ENCODE measurements at regions of chr7 and their contacts with region 1.

Region 1: GRCh38 chr7:102450242-102450641 is 14.4 kb downstream of the ALKBH4 start:
- DNase-seq: peak in 8 of 9 experiments; percentile 31 to 73 (median 63)
- ATAC-seq: peak; percentile 95
- H3K4me3 ChIP-seq: no peak overlapping the region
- H3K4me3 Mint-ChIP-seq: no peak overlapping the region
- H3K27ac ChIP-seq: no peak overlapping the region
- H3K27ac Mint-ChIP-seq: no peak overlapping the region
- H3K4me1 ChIP-seq: no peaks in the 10 kb centered on the region
- H3K4me1 Mint-ChIP-seq: no peaks in the 10 kb centered on the region
- H3K27me3 ChIP-seq: no peaks in the 10 kb centered on the region
- H3K27me3 Mint-ChIP-seq: no peaks in the 10 kb centered on the region
- CTCF ChIP-seq: peak; percentile 54

Region 2: DNA sequence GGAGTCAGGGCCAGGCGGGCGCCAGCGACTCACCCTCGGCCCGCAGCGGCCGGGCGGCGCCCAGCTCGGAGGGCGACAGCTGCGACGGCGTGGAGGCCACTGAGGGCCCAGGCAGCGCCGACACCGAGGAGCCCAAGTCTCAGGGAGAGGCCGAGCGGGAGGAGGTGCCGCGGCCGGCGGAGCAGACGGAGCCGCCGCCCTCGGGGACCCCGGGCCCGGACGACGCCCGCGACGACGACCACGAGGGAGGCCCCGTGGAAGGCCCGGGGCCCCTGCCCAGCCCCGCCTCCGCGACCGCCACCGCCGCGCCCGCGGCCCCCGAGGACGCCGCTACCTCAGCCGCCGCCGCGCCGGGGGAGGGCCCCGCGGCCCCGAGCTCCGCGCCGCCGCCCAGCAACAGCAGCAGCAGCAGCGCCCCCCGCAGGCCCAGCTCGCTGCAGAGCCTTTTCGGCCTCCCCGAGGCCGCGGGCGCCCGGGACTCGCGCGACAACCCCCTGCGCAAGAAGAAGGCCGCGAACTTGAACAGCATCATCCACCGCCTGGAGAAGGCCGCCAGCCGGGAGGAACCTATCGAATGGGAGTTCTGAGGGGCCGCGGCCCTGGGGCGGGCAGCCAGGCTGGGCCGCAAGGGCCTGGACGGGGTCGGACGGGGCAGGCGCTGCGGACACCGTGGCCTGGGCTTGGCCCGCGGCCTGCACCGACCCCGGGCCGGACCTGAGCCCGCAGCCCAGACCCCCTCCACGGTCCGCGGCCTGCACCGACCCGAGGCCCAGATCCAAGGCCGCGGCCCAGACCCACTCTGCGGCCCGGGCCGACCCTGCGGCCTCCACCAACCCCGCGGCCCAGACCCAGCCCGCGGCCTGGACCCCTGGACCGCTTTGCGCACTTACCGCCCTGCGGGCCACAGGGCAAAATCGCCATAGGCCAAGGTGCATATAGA is 201.5 kb before region 1 on chr7:
- CTCF ChIA-PET with region 1: no interaction called
- POLR2A ChIA-PET with region 1: no interaction called
- intact Hi-C with region 1: no loop called
- DNase-seq: no peak
- ATAC-seq: no peak
- H3K4me3 ChIP-seq: no peak overlapping the region
- H3K4me3 Mint-ChIP-seq: no peak overlapping the region
- H3K27ac ChIP-seq: no peak overlapping the region
- H3K27ac Mint-ChIP-seq: no peak overlapping the region
- H3K4me1 ChIP-seq: no peaks in the 10 kb centered on the region
- H3K4me1 Mint-ChIP-seq: no peaks in the 10 kb centered on the region
- H3K27me3 ChIP-seq: no peaks in the 10 kb centered on the region
- H3K27me3 Mint-ChIP-seq: no peaks in the 10 kb centered on the region
- CTCF ChIP-seq: no peak

Region 3: DNA sequence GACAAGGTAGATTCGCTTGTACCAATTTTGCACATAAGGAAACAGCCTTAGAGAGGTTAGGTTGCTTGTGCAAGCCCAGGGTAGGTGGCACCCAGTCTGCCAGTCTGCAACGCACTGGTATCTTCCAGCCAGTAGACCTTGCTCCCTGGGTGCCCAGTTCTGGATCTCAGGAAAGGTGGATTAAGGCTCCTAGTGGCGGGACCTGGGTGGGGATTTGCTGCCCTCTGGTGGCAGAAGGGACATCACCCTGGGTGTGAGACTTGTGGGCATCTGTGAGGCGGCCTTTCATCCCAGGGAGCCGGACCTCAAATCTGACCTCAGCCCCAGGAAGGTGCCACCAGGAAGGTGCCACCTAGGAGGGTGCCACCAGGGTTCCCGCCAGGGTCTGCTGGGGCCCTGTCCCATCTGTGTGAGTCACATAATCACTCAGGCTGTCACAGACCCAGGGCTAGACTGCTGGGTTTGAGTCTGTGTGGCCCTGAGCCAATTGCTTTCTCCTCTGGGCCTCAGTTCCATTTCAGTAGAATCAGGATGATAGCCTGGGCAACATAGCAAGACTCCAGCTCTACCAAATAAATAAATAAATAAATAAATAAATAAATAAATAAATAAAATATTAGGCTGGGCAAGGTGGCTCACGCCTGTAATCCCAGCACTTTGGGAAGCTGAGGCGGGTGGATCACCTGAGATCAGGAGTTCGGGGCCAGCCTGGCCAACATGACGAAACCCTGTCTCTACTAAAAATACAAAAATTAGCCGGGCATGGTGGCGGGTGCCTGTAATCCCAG is 59.4 kb before region 1 on chr7:
- CTCF ChIA-PET with region 1: interaction called, 13 read pairs
- POLR2A ChIA-PET with region 1: no interaction called
- intact Hi-C with region 1: no loop called
- DNase-seq: peak; percentile 34 to 81 (median 70)
- ATAC-seq: peak; percentile 71
- H3K4me3 ChIP-seq: no peak overlapping the region
- H3K4me3 Mint-ChIP-seq: no peak overlapping the region
- H3K27ac ChIP-seq: no peak overlapping the region
- H3K27ac Mint-ChIP-seq: no peak overlapping the region
- H3K4me1 ChIP-seq: peaks cover 4% of the 10 kb centered on the region
- H3K4me1 Mint-ChIP-seq: peaks cover 5% of the 10 kb centered on the region
- H3K27me3 ChIP-seq: no peaks in the 10 kb centered on the region
- H3K27me3 Mint-ChIP-seq: no peaks in the 10 kb centered on the region
- CTCF ChIP-seq: peak; percentile 82

Region 4: DNA sequence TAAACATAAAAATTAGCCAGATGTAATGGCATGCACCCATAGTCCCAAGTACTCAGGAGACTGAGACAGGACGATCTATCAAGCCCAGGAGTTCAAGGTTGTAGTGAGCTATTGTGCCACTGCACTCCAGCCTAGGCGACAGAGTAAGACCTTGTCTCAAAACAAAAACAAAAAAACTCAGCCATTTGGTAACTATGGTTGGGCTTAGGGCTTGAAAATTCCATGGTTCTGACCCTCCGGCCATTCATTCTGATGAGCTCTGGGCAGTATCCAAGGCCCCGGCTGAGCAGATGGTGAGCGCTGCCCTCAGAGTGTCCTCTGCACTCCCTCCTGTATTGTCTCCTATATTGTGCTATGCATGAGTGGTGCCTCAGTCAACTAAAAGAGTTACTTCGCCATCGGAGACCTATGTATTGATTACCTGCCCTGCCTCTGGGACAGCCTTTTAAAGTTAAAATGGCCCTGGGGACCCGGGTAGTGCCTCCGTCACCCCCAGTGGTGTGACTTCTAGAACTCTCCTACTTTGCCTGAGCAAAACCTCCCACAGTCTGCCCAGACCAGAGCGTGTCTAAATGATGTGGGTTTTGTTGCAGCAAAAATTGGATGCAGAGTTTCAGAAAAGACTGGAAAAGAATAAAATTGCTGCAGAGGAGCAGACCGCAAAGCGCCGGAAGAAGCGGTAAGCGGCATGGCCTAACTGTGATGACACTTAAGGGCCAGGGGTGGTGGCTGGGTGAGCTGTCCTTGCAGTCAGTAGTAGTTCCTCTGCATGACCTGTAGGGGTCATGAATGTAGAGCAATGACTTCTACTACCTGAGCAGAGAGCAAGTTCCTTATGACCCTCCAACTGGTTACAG is 46.0 kb before region 1 on chr7:
- CTCF ChIA-PET with region 1: interaction called, 65 read pairs
- POLR2A ChIA-PET with region 1: no interaction called
- intact Hi-C with region 1: loop called (anchors 1 kb)
- DNase-seq: peak in 7 of 9 experiments; percentile 32 to 83 (median 56)
- ATAC-seq: peak; percentile 100
- H3K4me3 ChIP-seq: no peak overlapping the region
- H3K4me3 Mint-ChIP-seq: no peak overlapping the region
- H3K27ac ChIP-seq: no peak overlapping the region
- H3K27ac Mint-ChIP-seq: no peak overlapping the region
- H3K4me1 ChIP-seq: no peaks in the 10 kb centered on the region
- H3K4me1 Mint-ChIP-seq: peaks cover 13% of the 10 kb centered on the region
- H3K27me3 ChIP-seq: no peaks in the 10 kb centered on the region
- H3K27me3 Mint-ChIP-seq: no peaks in the 10 kb centered on the region
- CTCF ChIP-seq: peak; percentile 75

Region 5: GRCh38 chr7:102425639-102426267 is 24.5 kb before region 1 on chr7:
- CTCF ChIA-PET with region 1: interaction called, 14 read pairs
- POLR2A ChIA-PET with region 1: interaction called, 7 read pairs
- intact Hi-C with region 1: no loop called
- DNase-seq: peak; percentile 72 to 96 (median 87)
- ATAC-seq: peak; percentile 78
- H3K4me3 ChIP-seq: peak overlapping the region; percentile 34 to 43
- H3K4me3 Mint-ChIP-seq: peak overlapping the region; percentile 80
- H3K27ac ChIP-seq: peak overlapping the region; percentile 99
- H3K27ac Mint-ChIP-seq: peak overlapping the region; percentile 100
- H3K4me1 ChIP-seq: peaks cover 82% of the 10 kb centered on the region
- H3K4me1 Mint-ChIP-seq: peaks cover 77% of the 10 kb centered on the region
- H3K27me3 ChIP-seq: no peaks in the 10 kb centered on the region
- H3K27me3 Mint-ChIP-seq: no peaks in the 10 kb centered on the region
- CTCF ChIP-seq: no peak